HepG2 (cell line): ENCODE measurements at regions of chr14 and their contacts with region 1.

Region 1: GRCh38 chr14:39203659-39204606 is 28.9 kb downstream of the PNN start:
- DNase-seq: peak; percentile 70
- ATAC-seq: peak; percentile 83
- H3K4me3 ChIP-seq: peak overlapping the region in 1 of 3 experiments; percentile 27; a peak in 2 of 6 replicates
- H3K27ac ChIP-seq: peak overlapping the region; percentile 49
- H3K4me1 ChIP-seq: peaks cover 30% of the 10 kb centered on the region
- H3K27me3 ChIP-seq: no peaks in the 10 kb centered on the region
- CTCF ChIP-seq: no peak
- EP300 ChIP-seq: no peak
- POLR2A ChIP-seq: no peak
- RAD21 ChIP-seq: no peak

Region 2: DNA sequence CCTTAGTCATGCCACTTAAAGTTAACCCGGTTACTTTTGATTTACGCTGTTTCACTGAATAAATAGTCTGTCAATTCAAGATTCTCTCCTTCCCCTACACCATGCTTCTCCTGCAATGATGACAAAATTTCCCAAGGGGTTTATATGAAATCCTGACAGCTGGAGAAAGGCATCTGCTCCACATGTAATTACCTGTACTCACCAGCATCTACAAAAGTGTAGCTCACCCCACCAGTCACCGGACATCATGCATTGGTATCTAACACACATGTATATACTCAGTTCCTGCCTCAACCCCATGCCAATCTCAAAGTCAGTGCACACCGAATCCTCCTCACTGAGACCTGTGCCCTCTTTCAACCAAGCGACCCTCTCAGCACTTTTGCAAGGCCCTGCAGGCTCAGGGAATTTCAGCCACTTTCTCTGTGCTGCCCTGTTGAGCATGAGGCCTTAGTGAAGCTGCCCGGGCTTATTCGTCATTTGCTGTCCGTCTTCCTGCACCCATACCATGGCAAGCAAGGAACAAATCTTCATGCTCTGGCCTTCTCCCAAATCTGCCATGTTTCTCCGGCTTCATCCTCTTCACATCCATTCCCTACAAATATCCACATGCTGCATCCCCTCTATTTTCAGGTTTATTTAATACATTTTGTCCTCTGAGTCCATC is 232.5 kb before region 1 on chr14:
- CTCF ChIA-PET with region 1: no interaction called
- POLR2A ChIA-PET with region 1: no interaction called
- in situ Hi-C with region 1: no loop called
- intact Hi-C with region 1: no loop called
- DNase-seq: no peak
- ATAC-seq: peak; percentile 83
- H3K4me3 ChIP-seq: no peak overlapping the region
- H3K27ac ChIP-seq: no peak overlapping the region
- H3K4me1 ChIP-seq: no peaks in the 10 kb centered on the region; the same call in 1 of the 2 replicates
- H3K27me3 ChIP-seq: peaks cover 0 to 10% of the 10 kb centered on the region in 2 experiments; a peak in 1 of 5 replicates
- CTCF ChIP-seq: no peak
- EP300 ChIP-seq: no peak
- POLR2A ChIP-seq: no peak
- RAD21 ChIP-seq: no peak

Region 3: DNA sequence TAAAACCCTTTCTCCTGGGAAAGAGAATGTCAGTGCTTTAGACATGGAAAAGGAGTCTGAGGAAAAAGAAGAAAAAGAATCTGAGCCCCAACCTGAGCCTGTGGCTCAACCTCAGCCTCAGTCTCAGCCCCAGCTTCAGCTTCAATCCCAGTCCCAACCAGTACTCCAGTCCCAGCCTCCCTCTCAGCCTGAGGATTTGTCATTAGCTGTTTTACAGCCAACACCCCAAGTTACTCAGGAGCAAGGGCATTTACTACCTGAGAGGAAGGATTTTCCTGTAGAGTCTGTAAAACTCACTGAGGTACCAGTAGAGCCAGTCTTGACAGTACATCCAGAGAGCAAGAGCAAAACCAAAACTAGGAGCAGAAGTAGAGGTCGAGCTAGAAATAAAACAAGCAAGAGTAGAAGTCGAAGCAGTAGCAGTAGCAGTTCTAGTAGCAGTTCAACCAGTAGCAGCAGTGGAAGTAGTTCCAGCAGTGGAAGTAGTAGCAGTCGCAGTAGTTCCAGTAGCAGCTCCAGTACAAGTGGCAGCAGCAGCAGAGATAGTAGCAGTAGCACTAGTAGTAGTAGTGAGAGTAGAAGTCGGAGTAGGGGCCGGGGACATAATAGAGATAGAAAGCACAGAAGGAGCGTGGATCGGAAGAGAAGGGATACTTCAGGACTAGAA is 22.8 kb before region 1 on chr14:
- CTCF ChIA-PET with region 1: no interaction called
- POLR2A ChIA-PET with region 1: interaction called, 15 read pairs
- in situ Hi-C with region 1: no loop called
- intact Hi-C with region 1: no loop called
- DNase-seq: no peak
- ATAC-seq: peak; percentile 14
- H3K4me3 ChIP-seq: no peak overlapping the region
- H3K27ac ChIP-seq: no peak overlapping the region
- H3K4me1 ChIP-seq: peaks cover 52% of the 10 kb centered on the region
- H3K27me3 ChIP-seq: no peaks in the 10 kb centered on the region
- CTCF ChIP-seq: no peak
- EP300 ChIP-seq: no peak
- POLR2A ChIP-seq: peak; percentile 46 to 48; a peak in 3 of 4 replicates
- RAD21 ChIP-seq: 0 out of 2 replicates have a peak, but pooled peaks have one; percentile 31